ENCODE measurements at regions of chr21 and their contacts with region 1.

Region 1: DNA sequence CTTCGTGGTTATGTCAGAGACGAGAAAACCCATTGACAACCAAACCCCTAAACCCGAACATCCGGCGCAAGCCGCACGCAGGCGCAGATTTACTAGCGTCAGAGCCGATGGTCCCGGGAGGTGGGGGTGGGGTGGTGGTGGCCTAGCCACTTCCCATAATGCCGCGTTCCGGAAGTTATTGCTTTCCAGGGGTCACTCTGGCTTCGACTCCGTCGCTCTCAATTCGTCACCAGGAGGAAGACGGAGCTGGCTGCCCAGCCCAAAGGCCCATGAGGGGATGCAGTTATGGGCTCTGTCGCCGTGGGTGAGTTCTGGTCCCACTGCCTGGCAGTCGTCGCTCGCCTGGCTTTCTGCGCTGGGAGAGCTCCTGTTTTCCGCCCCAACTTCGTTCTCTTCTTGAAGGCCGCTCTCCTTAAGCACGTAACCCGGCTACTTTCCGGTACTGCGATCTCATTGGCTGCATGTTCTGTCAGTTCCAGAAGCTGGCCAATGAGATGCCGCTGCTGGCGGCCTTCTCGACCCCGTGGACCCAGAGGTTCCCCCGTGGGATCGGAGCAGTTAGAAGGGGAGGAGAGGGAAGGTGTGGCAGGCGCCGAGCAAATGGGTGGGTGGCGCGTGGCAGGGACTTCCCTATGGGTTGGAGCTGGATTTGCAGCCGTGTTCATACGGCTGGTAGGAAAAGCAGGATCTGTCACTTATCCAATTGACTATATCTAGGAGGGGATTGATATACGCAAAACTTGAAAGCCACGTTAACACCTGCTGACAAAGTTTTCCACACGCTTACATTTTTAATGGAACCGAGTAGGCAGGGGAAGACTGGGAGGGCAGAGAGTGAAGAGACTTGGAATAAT is at the start of gene USP16:
- DNase-seq: peak; percentile 96 to 98
- ATAC-seq: peak; percentile 82 to 95 (median 85)
- H3K4me3 ChIP-seq: peak within 1 kb of the TSS; percentile 81
- H3K4me3 Mint-ChIP-seq: peak within 1 kb of the TSS; percentile 98
- H3K27ac ChIP-seq: peak within 1 kb of the TSS; percentile 98
- H3K27ac Mint-ChIP-seq: peak within 1 kb of the TSS; percentile 99 to 100
- H3K4me1 ChIP-seq: peaks cover 37% of the 10 kb centered on the region
- H3K4me1 Mint-ChIP-seq: peaks cover 43 to 56% of the 10 kb centered on the region in 2 donors
- H3K27me3 ChIP-seq: no peaks in the 10 kb centered on the region
- H3K27me3 Mint-ChIP-seq: no peaks in the 10 kb centered on the region
- CTCF ChIP-seq: no peak
- total RNA-seq, gene USP16: 67.9 to 76.9 (median 75.7) TPM

Region 2: DNA sequence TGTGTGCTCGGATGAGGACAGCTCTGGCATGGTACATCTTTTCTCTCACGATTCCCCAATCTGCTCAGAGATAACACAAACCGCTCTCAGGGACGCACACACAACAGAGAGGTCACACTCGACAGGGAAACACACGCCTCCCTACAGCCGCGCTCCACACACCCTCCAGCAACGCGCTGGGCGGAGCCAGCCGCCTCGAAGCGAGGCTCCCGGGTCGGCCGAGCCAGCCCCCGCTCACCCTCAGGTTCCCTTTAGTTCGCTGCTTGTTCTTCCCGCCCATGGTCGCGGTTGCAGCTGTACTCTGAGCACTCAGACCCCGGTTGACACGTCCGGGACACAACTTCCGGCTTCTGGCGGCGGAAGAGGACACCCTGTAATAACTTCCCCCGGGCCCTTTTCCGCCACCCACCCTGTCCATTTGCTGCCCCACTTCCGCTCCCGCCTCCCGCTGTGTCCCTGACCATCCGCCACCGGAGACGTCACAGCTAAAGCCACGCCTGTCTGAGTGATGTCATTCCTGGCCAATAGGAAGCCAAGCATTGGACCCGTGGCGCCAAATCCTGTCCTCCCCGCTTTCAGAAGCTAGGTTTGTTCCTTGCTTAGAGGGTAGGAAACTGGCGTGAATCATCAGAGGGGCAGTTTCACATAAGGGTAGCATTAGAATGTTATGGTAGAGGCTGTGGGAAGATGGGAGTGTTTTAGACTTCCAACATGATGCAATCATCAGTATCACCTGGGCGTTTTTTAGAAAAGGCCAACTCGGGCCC is 32.0 kb before region 1 on chr21 and contains the start of gene LTN1:
- intact Hi-C with region 1: loop called (anchors 1 kb)
- DNase-seq: peak; percentile 99 to 100
- ATAC-seq: peak; percentile 94 to 99 (median 95)
- H3K4me3 ChIP-seq: peak within 1 kb of the TSS; percentile 89
- H3K4me3 Mint-ChIP-seq: peak within 1 kb of the TSS; percentile 99
- H3K27ac ChIP-seq: peak within 1 kb of the TSS; percentile 90
- H3K27ac Mint-ChIP-seq: peak within 1 kb of the TSS; percentile 95 to 98
- H3K4me1 ChIP-seq: peaks cover 10% of the 10 kb centered on the region
- H3K4me1 Mint-ChIP-seq: peaks cover 29 to 36% of the 10 kb centered on the region in 2 donors
- H3K27me3 ChIP-seq: no peaks in the 10 kb centered on the region
- H3K27me3 Mint-ChIP-seq: no peaks in the 10 kb centered on the region
- CTCF ChIP-seq: no peak
- total RNA-seq, gene LTN1: 33.7 to 43.1 (median 35.0) TPM

Region 3: GRCh38 chr21:29002442-29003144 is 22.1 kb before region 1 on chr21:
- intact Hi-C with region 1: loop called (anchors 1 kb)
- DNase-seq: peak; percentile 93 to 99
- ATAC-seq: peak; percentile 99 to 100 (median 100)
- H3K4me3 ChIP-seq: peak overlapping the region; percentile 69
- H3K4me3 Mint-ChIP-seq: peak overlapping the region; percentile 87
- H3K27ac ChIP-seq: peak overlapping the region; percentile 95
- H3K27ac Mint-ChIP-seq: peak overlapping the region; percentile 95 to 96
- H3K4me1 ChIP-seq: peaks cover 12% of the 10 kb centered on the region
- H3K4me1 Mint-ChIP-seq: peaks cover 6 to 7% of the 10 kb centered on the region in 2 donors
- H3K27me3 ChIP-seq: no peaks in the 10 kb centered on the region
- H3K27me3 Mint-ChIP-seq: no peaks in the 10 kb centered on the region
- CTCF ChIP-seq: no peak

Region 4: GRCh38 chr21:29053011-29053553 is 28.4 kb after region 1 on chr21:
- intact Hi-C with region 1: loop called (anchors 2 kb)
- DNase-seq: no peak
- ATAC-seq: no peak
- H3K4me3 ChIP-seq: no peak overlapping the region
- H3K4me3 Mint-ChIP-seq: no peak overlapping the region
- H3K27ac ChIP-seq: no peak overlapping the region
- H3K27ac Mint-ChIP-seq: no peak overlapping the region
- H3K4me1 ChIP-seq: no peaks in the 10 kb centered on the region
- H3K4me1 Mint-ChIP-seq: no peaks in the 10 kb centered on the region
- H3K27me3 ChIP-seq: no peaks in the 10 kb centered on the region
- H3K27me3 Mint-ChIP-seq: no peaks in the 10 kb centered on the region
- CTCF ChIP-seq: no peak

Measured in natural killer cell (primary cell).